ENCODE measurements at regions of chr6 and their contacts with region 1.

Region 1: DNA sequence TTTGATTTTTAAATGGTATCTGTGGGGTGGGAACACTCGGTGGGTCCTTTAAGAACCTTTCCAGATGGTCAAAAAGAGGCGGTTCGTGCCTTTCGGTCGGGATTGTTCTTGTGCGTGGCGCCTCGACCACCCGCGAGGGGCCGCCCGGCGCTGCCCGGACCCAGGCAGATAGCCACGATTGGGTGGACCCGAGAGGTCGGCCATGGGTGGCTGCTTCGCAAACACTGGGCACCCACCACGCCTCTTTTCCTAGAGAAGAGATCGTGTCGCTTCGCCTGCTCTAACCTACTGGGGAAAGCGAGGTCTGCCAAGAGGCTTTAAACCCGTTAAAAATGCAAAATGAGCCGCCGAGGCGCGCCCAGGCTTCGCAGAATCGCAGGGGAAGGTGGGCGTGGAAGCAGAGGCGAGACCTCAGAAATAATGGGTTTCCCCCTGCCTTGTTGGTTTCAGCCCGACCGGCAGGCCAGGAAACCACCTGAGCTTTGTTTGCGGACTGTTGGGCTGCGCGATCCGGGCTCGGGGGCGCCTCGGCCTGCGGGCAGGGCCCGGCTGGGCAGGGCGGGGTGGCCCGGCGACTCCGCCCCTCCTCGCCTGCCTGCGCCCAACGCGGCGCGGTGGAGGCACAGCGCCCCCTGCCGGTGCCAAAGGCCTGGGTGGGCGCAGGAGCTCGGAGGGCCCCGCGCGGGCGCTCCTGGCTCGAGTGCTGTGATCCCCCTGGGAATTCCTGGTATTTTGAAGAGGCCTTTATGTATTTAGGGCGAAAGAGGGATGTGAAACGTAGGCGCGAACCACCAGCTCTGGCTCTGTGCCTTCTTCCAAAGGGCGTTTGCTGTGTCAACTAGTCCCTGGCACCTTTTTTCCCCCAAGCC is 1.6 kb downstream of the MARCKS start:
- DNase-seq: peak; percentile 89
- ATAC-seq: peak; percentile 91
- H3K4me3 ChIP-seq: peak overlapping the region; percentile 88 to 100 (median 97)
- H3K27ac ChIP-seq: peak overlapping the region; percentile 98
- H3K4me1 ChIP-seq: peaks cover 39% of the 10 kb centered on the region
- H3K27me3 ChIP-seq: peaks cover 0 to 8% of the 10 kb centered on the region in 2 experiments; a peak in 3 of 5 replicates
- CTCF ChIP-seq: peak; percentile 89
- EP300 ChIP-seq: peak; percentile 41 to 63; a peak in 3 of 4 replicates
- POLR2A ChIP-seq: peak; percentile 75 to 76; a peak in 3 of 4 replicates
- RAD21 ChIP-seq: peak; percentile 99

Region 2: DNA sequence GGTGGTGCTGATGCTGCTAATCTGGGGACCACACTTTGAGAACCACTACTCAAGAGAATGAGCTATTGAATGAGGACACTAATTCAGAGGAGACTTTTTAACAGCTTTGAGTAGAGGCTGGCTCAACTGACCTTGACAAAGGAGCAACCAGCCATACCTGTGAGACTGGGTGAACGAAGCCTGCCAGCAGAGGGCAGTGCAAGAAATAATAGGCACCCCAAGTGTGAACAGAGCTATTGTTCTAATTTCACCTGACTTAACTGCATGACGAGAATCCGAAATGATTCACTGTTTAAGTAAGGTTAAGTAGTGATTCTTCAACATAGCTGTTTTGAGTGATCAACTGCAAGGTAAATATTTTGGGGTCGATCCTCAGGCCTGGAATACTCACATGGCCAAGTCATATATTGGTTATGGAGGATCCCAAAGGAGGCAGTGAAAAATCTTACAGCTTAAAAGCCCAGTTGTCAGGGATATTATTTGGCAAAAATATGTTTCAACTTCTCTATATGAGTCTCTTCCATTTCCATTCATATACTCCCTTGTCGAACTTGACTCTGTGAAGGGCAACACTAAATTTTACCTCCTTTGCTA is 552.1 kb before region 1 on chr6:
- CTCF ChIA-PET with region 1: no interaction called
- POLR2A ChIA-PET with region 1: interaction called, 8 read pairs
- in situ Hi-C with region 1: loop called (anchors 5 kb)
- intact Hi-C with region 1: loop called (anchors 1 kb)
- DNase-seq: peak; percentile 62
- ATAC-seq: peak; percentile 98
- H3K4me3 ChIP-seq: no peak overlapping the region; a peak in 1 of 6 replicates
- H3K27ac ChIP-seq: no peak overlapping the region
- H3K4me1 ChIP-seq: peaks cover 9% of the 10 kb centered on the region; the same call in 1 of the 2 replicates
- H3K27me3 ChIP-seq: no peaks in the 10 kb centered on the region
- CTCF ChIP-seq: peak; percentile 87
- EP300 ChIP-seq: no peak
- POLR2A ChIP-seq: no peak
- RAD21 ChIP-seq: peak; percentile 81

Region 3: DNA sequence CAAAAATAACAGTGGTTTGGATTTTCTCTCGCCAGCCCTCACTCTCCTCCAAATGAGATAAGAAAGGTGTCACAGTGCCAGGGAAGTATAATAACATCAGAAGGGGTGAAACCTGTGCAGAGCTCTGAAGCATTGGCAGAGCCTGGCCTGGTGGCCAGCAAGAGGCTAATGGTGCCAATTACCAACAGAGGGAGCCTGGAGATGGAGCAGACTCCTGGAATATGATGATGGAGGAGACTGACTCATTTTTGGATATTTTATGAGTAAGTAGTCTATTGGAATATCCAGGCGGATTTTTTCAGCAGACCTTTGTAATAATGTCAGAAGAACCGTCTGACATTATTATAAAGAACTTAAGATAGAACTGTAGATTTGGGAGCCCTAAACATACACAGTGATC is 444.2 kb before region 1 on chr6:
- CTCF ChIA-PET with region 1: no interaction called
- POLR2A ChIA-PET with region 1: interaction called, 4 read pairs
- in situ Hi-C with region 1: no loop called
- intact Hi-C with region 1: loop called (anchors 1 kb)
- DNase-seq: peak; percentile 40
- ATAC-seq: peak; percentile 92
- H3K4me3 ChIP-seq: no peak overlapping the region
- H3K27ac ChIP-seq: no peak overlapping the region
- H3K4me1 ChIP-seq: no peaks in the 10 kb centered on the region
- H3K27me3 ChIP-seq: no peaks in the 10 kb centered on the region
- CTCF ChIP-seq: peak; percentile 58
- EP300 ChIP-seq: no peak
- POLR2A ChIP-seq: no peak
- RAD21 ChIP-seq: peak; percentile 48

Region 4: GRCh38 chr6:113632220-113632864 is 226.4 kb before region 1 on chr6:
- CTCF ChIA-PET with region 1: no interaction called
- POLR2A ChIA-PET with region 1: interaction called, 14 read pairs
- in situ Hi-C with region 1: loop called (anchors 5 kb)
- intact Hi-C with region 1: loop called (anchors 2 kb)
- DNase-seq: peak; percentile 78
- ATAC-seq: peak; percentile 92
- H3K4me3 ChIP-seq: peak overlapping the region in 2 of 3 experiments; percentile 9 to 29; a peak in 2 of 6 replicates
- H3K27ac ChIP-seq: peak overlapping the region; percentile 61
- H3K4me1 ChIP-seq: peaks cover 69% of the 10 kb centered on the region
- H3K27me3 ChIP-seq: no peaks in the 10 kb centered on the region
- CTCF ChIP-seq: no peak
- EP300 ChIP-seq: peak in 1 of 2 experiments; percentile 60; a peak in 1 of 4 replicates
- POLR2A ChIP-seq: peak in 1 of 2 experiments; percentile 38; a peak in 1 of 4 replicates
- RAD21 ChIP-seq: no peak

Region 5: DNA sequence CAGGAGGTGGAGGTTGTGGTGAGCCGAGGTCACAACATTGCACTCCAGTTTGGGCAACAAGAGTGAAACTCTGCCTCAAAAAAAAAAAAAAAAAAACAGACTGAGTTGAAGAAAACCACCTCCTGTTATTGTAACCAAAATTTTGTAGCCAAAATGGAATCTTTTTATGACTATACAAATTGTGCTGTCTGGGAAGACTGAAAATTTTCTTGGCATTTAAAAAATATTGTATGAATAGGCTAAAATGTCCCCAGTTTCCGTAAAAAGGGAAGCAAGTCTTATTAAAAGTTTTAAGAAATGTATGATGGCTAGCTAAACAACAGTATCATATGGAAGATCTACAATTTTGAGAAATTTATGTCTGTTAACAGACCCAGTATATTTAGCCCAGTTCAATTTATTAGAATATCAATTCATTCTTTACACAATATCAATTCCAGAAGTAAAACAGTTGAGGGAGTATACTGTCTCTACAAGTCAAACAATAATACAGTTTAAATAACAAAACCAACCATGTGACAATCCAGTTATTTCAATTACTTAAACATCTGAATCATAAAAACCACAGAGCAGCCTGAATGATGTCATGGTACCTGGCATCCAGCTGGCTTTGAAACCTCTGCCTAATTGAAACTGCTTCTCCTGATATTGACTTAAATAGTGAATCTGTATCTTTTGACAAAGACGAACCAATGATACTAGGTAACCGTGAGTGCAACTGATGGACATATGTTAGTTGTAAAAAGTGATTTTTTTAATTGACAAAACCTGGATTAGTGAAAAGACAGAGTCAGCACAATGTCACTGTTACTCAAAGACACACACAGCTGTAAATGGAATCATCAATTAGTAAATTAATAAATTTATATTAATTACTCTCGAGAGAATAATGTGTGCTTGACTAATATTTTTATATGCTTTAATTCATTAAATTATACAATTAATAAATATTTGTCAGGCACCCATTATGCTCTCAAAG is 168.1 kb before region 1 on chr6:
- CTCF ChIA-PET with region 1: no interaction called
- POLR2A ChIA-PET with region 1: interaction called, 8 read pairs
- in situ Hi-C with region 1: loop called (anchors 10 kb)
- intact Hi-C with region 1: loop called (anchors 10 kb)
- DNase-seq: peak; percentile 58
- ATAC-seq: no peak
- H3K4me3 ChIP-seq: no peak overlapping the region
- H3K27ac ChIP-seq: no peak overlapping the region
- H3K4me1 ChIP-seq: peaks cover 33% of the 10 kb centered on the region
- H3K27me3 ChIP-seq: no peaks in the 10 kb centered on the region
- CTCF ChIP-seq: no peak
- EP300 ChIP-seq: peak in 1 of 2 experiments; percentile 42; a peak in 1 of 4 replicates
- POLR2A ChIP-seq: no peak
- RAD21 ChIP-seq: no peak

Region 6: GRCh38 chr6:113825781-113826180 is 32.9 kb before region 1 on chr6:
- CTCF ChIA-PET with region 1: no interaction called
- POLR2A ChIA-PET with region 1: no interaction called
- in situ Hi-C with region 1: no loop called
- intact Hi-C with region 1: no loop called
- DNase-seq: no peak
- ATAC-seq: no peak
- H3K4me3 ChIP-seq: no peak overlapping the region
- H3K27ac ChIP-seq: no peak overlapping the region
- H3K4me1 ChIP-seq: no peaks in the 10 kb centered on the region
- H3K27me3 ChIP-seq: no peaks in the 10 kb centered on the region
- CTCF ChIP-seq: no peak
- EP300 ChIP-seq: no peak
- POLR2A ChIP-seq: no peak
- RAD21 ChIP-seq: no peak

Region 7: DNA sequence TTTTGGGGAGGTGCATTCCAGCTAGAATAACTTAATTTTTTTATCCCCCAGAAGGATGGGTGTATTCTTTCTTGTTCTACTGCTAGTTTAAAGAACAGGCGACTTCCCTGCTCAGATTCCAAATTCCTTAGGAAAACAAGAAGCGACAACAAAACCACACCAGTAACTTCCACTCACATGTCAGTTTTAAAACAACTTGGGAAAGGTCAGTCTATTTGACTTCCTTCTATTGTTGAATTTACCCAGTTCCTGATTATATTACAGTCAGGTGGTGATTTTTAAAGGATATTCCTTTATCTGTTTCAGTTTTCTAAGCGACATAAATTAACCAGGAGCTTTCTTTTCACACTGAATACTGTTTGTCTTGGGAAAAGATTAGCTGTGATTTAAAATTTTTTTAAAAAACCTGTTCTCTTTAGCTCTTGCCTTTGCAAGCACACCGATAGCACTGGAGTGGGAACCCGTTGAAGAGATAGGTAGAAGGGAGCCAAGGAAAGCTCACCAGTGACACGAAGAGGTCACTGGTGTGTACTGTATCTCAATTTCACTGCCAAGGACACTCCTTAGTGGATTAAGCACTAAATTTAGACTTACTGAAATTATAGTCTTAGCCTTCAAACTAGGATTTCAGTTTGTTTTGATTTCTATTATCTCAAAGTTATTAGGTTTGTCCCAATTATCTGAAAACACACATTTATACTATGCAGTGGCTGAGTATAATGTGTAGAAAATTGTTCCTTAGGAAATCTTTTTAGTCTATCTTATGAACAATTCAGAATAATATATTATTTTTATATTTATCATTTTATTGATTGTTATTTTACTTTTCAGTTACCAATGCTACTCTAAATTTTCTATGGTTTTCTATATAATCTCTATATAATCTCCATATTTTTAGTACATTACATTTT is 20.7 kb after region 1 on chr6:
- CTCF ChIA-PET with region 1: interaction called, 3 read pairs
- POLR2A ChIA-PET with region 1: interaction called, 7 read pairs
- in situ Hi-C with region 1: no loop called
- intact Hi-C with region 1: loop called (anchors 2 kb)
- DNase-seq: peak; percentile 67
- ATAC-seq: peak; percentile 100
- H3K4me3 ChIP-seq: no peak overlapping the region
- H3K27ac ChIP-seq: no peak overlapping the region
- H3K4me1 ChIP-seq: peaks cover 13% of the 10 kb centered on the region
- H3K27me3 ChIP-seq: no peaks in the 10 kb centered on the region; a peak in 1 of 5 replicates
- CTCF ChIP-seq: peak; percentile 87
- EP300 ChIP-seq: no peak
- POLR2A ChIP-seq: no peak
- RAD21 ChIP-seq: peak; percentile 77

Measured in HepG2 (cell line).